ENCODE measurements at regions of chr5 and their contacts with region 1.

Region 1: GRCh38 chr5:160269017-160269416 is 39.7 kb downstream of the FABP6 start:
- DNase-seq: peak; percentile 90
- H3K4me3 Mint-ChIP-seq: no peak overlapping the region
- H3K27ac Mint-ChIP-seq: no peak overlapping the region
- H3K4me1 Mint-ChIP-seq: no peaks in the 10 kb centered on the region
- H3K27me3 Mint-ChIP-seq: no peaks in the 10 kb centered on the region
- CTCF ChIP-seq: no peak

Region 2: DNA sequence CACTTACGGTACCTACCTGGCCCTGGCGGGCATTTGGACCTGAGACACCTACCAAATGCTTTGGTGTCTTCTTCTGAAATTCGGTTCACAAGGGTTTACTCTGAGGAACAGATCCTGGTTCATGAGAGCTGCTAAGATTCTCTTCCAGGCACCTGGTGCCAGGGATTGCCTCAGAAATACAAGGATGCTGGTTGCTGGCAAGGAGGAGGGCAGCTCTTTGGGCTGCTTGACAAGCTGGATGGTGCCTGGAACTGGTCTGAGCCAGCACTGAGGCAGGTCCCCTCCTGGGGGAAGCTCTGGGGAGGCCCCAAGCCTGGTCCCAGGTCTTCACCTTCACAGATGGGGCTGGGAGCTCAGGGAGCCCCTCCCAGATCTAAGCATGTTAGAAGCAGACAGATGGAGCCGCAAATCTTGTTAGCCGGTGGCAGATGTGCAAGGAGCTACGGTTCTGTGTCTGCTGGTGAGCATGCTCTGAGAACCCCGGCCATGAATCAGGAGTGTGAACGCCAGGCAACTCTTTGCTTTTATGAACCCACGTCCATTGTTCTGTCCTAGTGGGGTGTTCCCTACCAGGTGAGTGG is 23.4 kb before region 1 on chr5:
- CTCF ChIA-PET with region 1: interaction called, 11 read pairs
- POLR2A ChIA-PET with region 1: interaction called, 5 read pairs
- intact Hi-C with region 1: no loop called
- DNase-seq: no peak
- H3K4me3 Mint-ChIP-seq: no peak overlapping the region
- H3K27ac Mint-ChIP-seq: no peak overlapping the region
- H3K4me1 Mint-ChIP-seq: no peaks in the 10 kb centered on the region
- H3K27me3 Mint-ChIP-seq: peaks cover 12% of the 10 kb centered on the region
- CTCF ChIP-seq: no peak

Region 3: GRCh38 chr5:161358446-161358845 is 1089.4 kb after region 1 on chr5:
- CTCF ChIA-PET with region 1: no interaction called
- POLR2A ChIA-PET with region 1: no interaction called
- intact Hi-C with region 1: no loop called
- DNase-seq: no peak
- H3K4me3 Mint-ChIP-seq: no peak overlapping the region
- H3K27ac Mint-ChIP-seq: no peak overlapping the region
- H3K4me1 Mint-ChIP-seq: no peaks in the 10 kb centered on the region
- H3K27me3 Mint-ChIP-seq: no peaks in the 10 kb centered on the region
- CTCF ChIP-seq: no peak

Measured in MCF 10A (cell line).